ENCODE measurements at regions of chr7 and their contacts with region 1.

Region 1: DNA sequence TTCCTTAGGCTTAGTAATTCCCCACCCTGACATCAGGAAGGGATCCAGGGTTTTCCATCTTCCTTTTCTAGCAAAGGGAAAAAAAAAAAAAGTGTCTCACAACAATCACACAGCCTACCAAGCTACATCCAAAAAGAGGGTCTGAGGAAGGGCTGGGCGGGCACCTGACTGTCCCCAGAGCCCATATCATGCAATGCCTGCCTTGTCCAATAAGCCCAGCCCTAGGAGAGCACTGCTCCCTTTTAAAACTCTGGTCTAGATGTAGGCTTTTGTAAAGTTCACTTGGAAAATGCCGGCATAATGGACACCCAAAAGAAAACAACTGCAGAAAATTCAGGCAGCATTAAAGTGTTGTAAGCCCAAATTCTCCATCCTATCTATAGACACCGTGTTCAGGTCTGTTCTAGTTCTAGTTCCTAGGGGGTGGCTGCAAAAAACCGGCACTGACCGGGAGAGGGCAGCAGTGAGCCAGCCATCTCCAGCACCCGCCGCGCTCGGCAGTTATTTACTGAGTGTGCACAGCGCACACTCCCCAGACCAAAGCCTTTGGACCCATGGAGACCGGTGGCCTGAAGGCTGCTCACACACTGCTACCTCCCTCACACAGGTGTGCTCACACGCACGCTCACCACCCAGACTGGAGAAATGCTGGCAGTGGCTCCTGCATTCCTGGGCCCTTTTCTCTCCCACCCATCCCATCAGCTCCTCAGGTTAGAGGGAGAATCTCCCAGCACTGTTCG is 48.7 kb downstream of the PODXL start:
- DNase-seq: peak; percentile 62 to 66
- ATAC-seq: peak; percentile 70 to 86
- H3K4me3 ChIP-seq: no peak overlapping the region
- H3K27ac ChIP-seq: peak overlapping the region in 1 of 2 experiments; percentile 62; a peak in 3 of 6 replicates
- H3K4me1 ChIP-seq: peaks cover 15% of the 10 kb centered on the region
- CTCF ChIP-seq: peak; percentile 92
- EP300 ChIP-seq: no peak
- POLR2A ChIP-seq: no peak
- RAD21 ChIP-seq: peak; percentile 85 to 90

Region 2: GRCh38 chr7:131493581-131493980 is 14.2 kb before region 1 on chr7:
- CTCF ChIA-PET with region 1: interaction called, 58 read pairs
- POLR2A ChIA-PET with region 1: interaction called, 3 read pairs
- DNase-seq: no peak
- ATAC-seq: no peak
- H3K4me3 ChIP-seq: no peak overlapping the region
- H3K27ac ChIP-seq: no peak overlapping the region
- H3K4me1 ChIP-seq: no peaks in the 10 kb centered on the region
- CTCF ChIP-seq: no peak
- EP300 ChIP-seq: no peak
- POLR2A ChIP-seq: no peak
- RAD21 ChIP-seq: no peak

Region 3: GRCh38 chr7:131538071-131538790 is 30.5 kb after region 1 on chr7:
- CTCF ChIA-PET with region 1: interaction called, 17 read pairs
- POLR2A ChIA-PET with region 1: no interaction called
- DNase-seq: peak in 1 of 2 experiments; percentile 72
- ATAC-seq: peak; percentile 63 to 71; a peak in 4 of 6 replicates
- H3K4me3 ChIP-seq: no peak overlapping the region
- H3K27ac ChIP-seq: peak overlapping the region; percentile 65 to 86
- H3K4me1 ChIP-seq: peaks cover 37% of the 10 kb centered on the region
- CTCF ChIP-seq: no peak
- EP300 ChIP-seq: no peak
- POLR2A ChIP-seq: no peak
- RAD21 ChIP-seq: no peak

Measured in A549 (cell line).